ENCODE measurements at regions of chr13 and their contacts with region 1.

Region 1: GRCh38 chr13:113374511-113375175 is 10.7 kb upstream of the GRTP1 start:
- DNase-seq: peak in 1 of 3 donors; percentile 45
- ATAC-seq: no peak
- H3K4me3 ChIP-seq: no peak overlapping the region
- H3K27ac ChIP-seq: no peak overlapping the region
- H3K4me1 ChIP-seq: peaks cover 0 to 14% (median 6%) of the 10 kb centered on the region in 4 donors
- H3K27me3 ChIP-seq: no peaks in the 10 kb centered on the region
- CTCF ChIP-seq: no peak
- POLR2A ChIP-seq: no peak

Region 2: GRCh38 chr13:113288880-113289279 is 85.8 kb before region 1 on chr13:
- intact Hi-C with region 1: loop called in 1 of 2 experiments (anchors 10 kb)
- DNase-seq: no peak
- ATAC-seq: no peak
- H3K4me3 ChIP-seq: no peak overlapping the region
- H3K27ac ChIP-seq: no peak overlapping the region
- H3K4me1 ChIP-seq: peaks cover 0 to 5% (median 0%) of the 10 kb centered on the region in 4 donors
- H3K27me3 ChIP-seq: no peaks in the 10 kb centered on the region
- CTCF ChIP-seq: no peak
- POLR2A ChIP-seq: no peak

Measured in right lobe of liver (tissue), 6 donors.